Naive thymus-derived CD8-positive, alpha-beta T cell (primary cell): ENCODE measurements at regions of chr11 and their contacts with region 1.

Region 1: GRCh38 chr11:95150946-95151684 is 61.5 kb downstream of the ENDOD1 start:
- DNase-seq: peak; percentile 81 to 95 (median 90)
- ATAC-seq: peak; percentile 91 to 96
- H3K4me3 Mint-ChIP-seq: peak overlapping the region; percentile 83 to 99 (median 90)
- H3K27ac Mint-ChIP-seq: peak overlapping the region; percentile 85 to 100 (median 96)
- H3K4me1 Mint-ChIP-seq: peaks cover 22 to 45% (median 32%) of the 10 kb centered on the region in 4 donors
- H3K27me3 Mint-ChIP-seq: peaks cover 3 to 11% (median 7%) of the 10 kb centered on the region in 5 donors

Region 2: DNA sequence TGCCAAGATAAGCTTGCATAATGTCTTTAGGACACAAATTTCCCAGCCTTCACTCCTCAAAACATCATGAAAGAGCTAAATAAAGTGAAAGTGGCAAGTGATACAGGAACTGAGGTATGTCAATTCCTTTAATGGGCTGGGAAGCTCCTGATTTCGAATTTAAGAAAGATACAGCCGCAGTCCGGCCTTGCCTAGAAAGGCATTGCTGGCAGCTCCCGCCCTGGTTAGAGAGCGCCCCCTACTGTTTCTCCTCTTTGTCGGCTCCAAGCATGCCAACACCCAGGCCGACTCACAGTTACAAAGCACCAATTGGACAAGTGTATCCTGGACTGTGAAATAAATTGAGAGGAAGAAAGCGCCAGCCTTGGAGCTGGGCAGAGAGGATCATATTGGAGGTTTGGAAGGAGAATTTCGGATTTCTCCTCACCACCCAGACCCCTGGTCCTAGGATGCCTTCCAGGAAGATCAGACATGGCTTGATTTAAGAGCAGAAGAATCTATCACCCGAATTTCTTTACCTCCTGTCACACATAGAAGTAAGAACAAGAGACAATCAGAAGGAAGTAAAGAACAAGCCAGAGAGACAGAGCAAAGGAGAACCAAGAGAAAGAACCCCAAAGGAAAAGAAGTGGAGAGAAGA is 554.5 kb after region 1 on chr11:
- POLR2A ChIA-PET with region 1: interaction called, 26 read pairs
- DNase-seq: peak; percentile 61 to 92 (median 82)
- ATAC-seq: peak; percentile 96
- H3K4me3 Mint-ChIP-seq: no peak overlapping the region
- H3K27ac Mint-ChIP-seq: no peak overlapping the region
- H3K4me1 Mint-ChIP-seq: peaks cover 0 to 9% (median 9%) of the 10 kb centered on the region in 4 donors
- H3K27me3 Mint-ChIP-seq: no peaks in the 10 kb centered on the region

Region 3: GRCh38 chr11:95764267-95764898 is 613.3 kb after region 1 on chr11:
- POLR2A ChIA-PET with region 1: interaction called, 11 read pairs
- DNase-seq: peak in 4 of 10 donors; percentile 6 to 69 (median 64)
- ATAC-seq: peak; percentile 75 to 90
- H3K4me3 Mint-ChIP-seq: no peak overlapping the region
- H3K27ac Mint-ChIP-seq: no peak overlapping the region
- H3K4me1 Mint-ChIP-seq: peaks cover 0 to 5% (median under 1%) of the 10 kb centered on the region in 4 donors
- H3K27me3 Mint-ChIP-seq: peaks cover 1 to 9% (median 2%) of the 10 kb centered on the region in 5 donors

Region 4: GRCh38 chr11:95924414-95924760 is 773.3 kb after region 1 on chr11:
- POLR2A ChIA-PET with region 1: no interaction called
- DNase-seq: peak in 1 of 10 donors; percentile 2
- ATAC-seq: peak in 1 of 2 donors; percentile 16
- H3K4me3 Mint-ChIP-seq: peak overlapping the region; percentile 87 to 99 (median 97)
- H3K27ac Mint-ChIP-seq: peak overlapping the region; percentile 89 to 100 (median 98)
- H3K4me1 Mint-ChIP-seq: peaks cover 13 to 33% (median 29%) of the 10 kb centered on the region in 4 donors
- H3K27me3 Mint-ChIP-seq: peaks cover 0 to 10% (median 2%) of the 10 kb centered on the region in 5 donors